ENCODE measurements at regions of chr5 and their contacts with region 1.

Region 1: GRCh38 chr5:151213800-151214613 is 9.9 kb downstream of the CCDC69 start:
- DNase-seq: peak; percentile 73 to 91 (median 85)
- ATAC-seq: peak; percentile 80 to 94 (median 92)
- H3K4me3 ChIP-seq: peak overlapping the region; percentile 61 to 87
- H3K4me3 Mint-ChIP-seq: peak overlapping the region; percentile 72 to 85 (median 80)
- H3K27ac ChIP-seq: peak overlapping the region; percentile 91
- H3K27ac Mint-ChIP-seq: peak overlapping the region; percentile 97 to 98
- H3K4me1 ChIP-seq: peaks cover 61 to 97% of the 10 kb centered on the region in 2 experiments
- H3K4me1 Mint-ChIP-seq: peaks cover 89 to 92% (median 90%) of the 10 kb centered on the region in 3 donors
- H3K27me3 ChIP-seq: no peaks in the 10 kb centered on the region
- H3K27me3 Mint-ChIP-seq: no peaks in the 10 kb centered on the region

Region 2: GRCh38 chr5:150428106-150428876 is 785.7 kb before region 1 on chr5:
- CTCF ChIA-PET with region 1: no interaction called
- POLR2A ChIA-PET with region 1: interaction called in 1 of 2 experiments, 16 read pairs
- DNase-seq: no peak
- ATAC-seq: no peak
- H3K4me3 ChIP-seq: no peak overlapping the region
- H3K4me3 Mint-ChIP-seq: no peak overlapping the region
- H3K27ac ChIP-seq: no peak overlapping the region
- H3K27ac Mint-ChIP-seq: no peak overlapping the region
- H3K4me1 ChIP-seq: no peaks in the 10 kb centered on the region
- H3K4me1 Mint-ChIP-seq: peaks cover 0 to 8% (median 0%) of the 10 kb centered on the region in 3 donors
- H3K27me3 ChIP-seq: peaks cover 0 to 17% of the 10 kb centered on the region in 2 experiments
- H3K27me3 Mint-ChIP-seq: peaks cover 4 to 5% of the 10 kb centered on the region in 2 donors

Region 3: GRCh38 chr5:151202381-151203139 is 11.4 kb before region 1 on chr5:
- CTCF ChIA-PET with region 1: interaction called, 3 to 13 read pairs
- POLR2A ChIA-PET with region 1: interaction called in 1 of 2 experiments, 4 read pairs
- DNase-seq: peak in 9 of 35 experiments; percentile 11 to 71 (median 26)
- ATAC-seq: peak; percentile 63 to 92 (median 76)
- H3K4me3 ChIP-seq: no peak overlapping the region
- H3K4me3 Mint-ChIP-seq: no peak overlapping the region
- H3K27ac ChIP-seq: peak overlapping the region; percentile 61
- H3K27ac Mint-ChIP-seq: peak overlapping the region; percentile 87 to 90
- H3K4me1 ChIP-seq: peaks cover 6 to 32% of the 10 kb centered on the region in 2 experiments
- H3K4me1 Mint-ChIP-seq: peaks cover 31 to 45% (median 44%) of the 10 kb centered on the region in 3 donors
- H3K27me3 ChIP-seq: no peaks in the 10 kb centered on the region
- H3K27me3 Mint-ChIP-seq: no peaks in the 10 kb centered on the region

Measured in T-cell (primary cell).